RWPE1 (cell line): ENCODE measurements at regions of chr9 and their contacts with region 1.

Region 1: DNA sequence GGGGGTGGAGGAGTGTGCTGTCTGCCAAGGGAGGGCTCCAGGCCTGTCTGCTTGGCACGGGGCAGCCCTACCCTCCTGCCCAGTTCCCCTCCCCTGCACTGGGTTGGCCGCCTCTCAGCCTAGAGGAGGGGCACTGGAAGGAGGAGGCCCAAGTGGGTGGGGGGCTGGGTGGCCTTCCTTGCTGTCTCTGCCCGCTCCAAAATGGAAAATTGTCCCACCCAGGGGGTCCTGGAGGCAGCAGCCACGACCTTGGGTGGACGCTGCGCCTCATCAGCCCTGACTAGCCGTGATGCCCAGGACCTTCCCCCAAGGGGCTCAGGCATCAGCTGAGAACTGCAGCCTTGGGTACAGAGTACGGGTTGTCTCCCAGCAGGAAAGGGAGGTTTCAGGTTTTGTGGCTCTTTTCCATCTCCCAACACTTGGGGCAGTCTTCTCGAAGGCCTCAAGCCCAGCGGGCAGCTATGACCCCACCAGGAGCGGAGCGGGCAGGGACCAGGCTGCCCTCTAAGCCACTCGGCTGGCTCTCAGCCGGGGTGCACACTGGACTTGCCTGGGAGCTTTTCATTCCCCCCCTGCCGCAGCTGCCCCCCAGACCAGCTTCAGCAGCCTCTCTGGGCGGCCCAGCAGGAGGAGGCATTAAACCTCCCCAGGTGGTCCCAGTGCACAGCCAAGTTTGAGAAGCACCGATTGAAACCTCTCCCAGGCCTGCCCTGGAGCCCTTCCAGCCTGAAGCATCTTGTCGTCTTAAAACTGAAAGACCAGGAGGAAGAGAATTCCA is 20.6 kb downstream of the NTNG2 start:
- DNase-seq: no peak
- H3K27ac ChIP-seq: no peak overlapping the region
- CTCF ChIP-seq: no peak

Region 2: GRCh38 chr9:132125944-132126720 is 56.4 kb before region 1 on chr9:
- CTCF ChIA-PET with region 1: no interaction called
- POLR2A ChIA-PET with region 1: no interaction called
- DNase-seq: no peak
- H3K27ac ChIP-seq: no peak overlapping the region
- CTCF ChIP-seq: no peak

Region 3: GRCh38 chr9:132169672-132170392 is 12.7 kb before region 1 on chr9:
- CTCF ChIA-PET with region 1: interaction called, 18 read pairs
- POLR2A ChIA-PET with region 1: no interaction called
- DNase-seq: peak; percentile 68
- H3K27ac ChIP-seq: no peak overlapping the region
- CTCF ChIP-seq: peak; percentile 98